Left ventricle myocardium superior (tissue), 1 donor: ENCODE measurements at regions of chr1 and their contacts with region 1.

Region 1: DNA sequence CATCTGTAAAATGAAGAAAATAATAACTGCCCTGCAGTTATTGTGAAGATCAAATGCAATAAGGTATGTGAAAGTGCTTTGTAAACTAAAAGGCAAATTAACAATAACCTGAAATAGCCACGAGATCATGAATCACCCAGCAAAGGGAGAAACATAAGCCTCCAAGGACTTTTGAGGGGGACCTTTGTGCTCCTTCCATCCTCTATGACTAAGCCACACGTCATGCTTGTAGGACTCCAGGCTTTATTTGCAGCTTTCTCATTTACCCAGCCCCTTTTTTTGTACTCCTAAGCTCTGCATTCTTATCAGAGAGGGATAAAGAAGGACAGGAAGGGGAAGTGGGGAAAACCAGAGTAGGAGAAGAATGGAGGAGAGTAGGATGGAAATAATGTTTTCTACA is 115.1 kb downstream of the PROX1 start:
- DNase-seq: no peak
- ATAC-seq: no peak

Region 2: GRCh38 chr1:213996320-213997037 is 106.4 kb before region 1 on chr1:
- intact Hi-C with region 1: loop called (anchors 10 kb)
- DNase-seq: peak; percentile 57
- ATAC-seq: peak; percentile 68

Region 3: DNA sequence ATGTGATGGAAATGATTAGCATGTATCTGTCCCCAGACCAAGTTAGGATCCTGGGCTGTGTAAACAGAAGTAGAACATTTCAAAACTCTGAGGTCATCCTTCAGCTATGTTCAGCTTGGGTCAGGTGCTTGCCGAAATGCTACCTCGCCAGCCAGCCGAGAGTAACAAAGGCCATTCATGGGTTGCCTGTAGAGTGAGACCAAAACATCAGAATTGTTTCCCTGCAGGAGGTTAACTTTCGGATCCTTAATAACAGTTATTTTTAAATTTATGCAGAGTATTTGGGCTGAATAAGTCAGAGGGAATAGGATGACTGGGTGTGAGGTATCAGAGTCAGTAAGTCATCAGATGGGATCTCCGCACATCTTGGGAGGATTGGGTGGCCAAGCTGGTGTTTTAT is 213.7 kb after region 1 on chr1:
- intact Hi-C with region 1: no loop called
- DNase-seq: peak; percentile 53
- ATAC-seq: peak; percentile 77